Adrenal gland (tissue), 19 donors: ENCODE measurements at regions of chr15 and their contacts with region 1.

Region 1: DNA sequence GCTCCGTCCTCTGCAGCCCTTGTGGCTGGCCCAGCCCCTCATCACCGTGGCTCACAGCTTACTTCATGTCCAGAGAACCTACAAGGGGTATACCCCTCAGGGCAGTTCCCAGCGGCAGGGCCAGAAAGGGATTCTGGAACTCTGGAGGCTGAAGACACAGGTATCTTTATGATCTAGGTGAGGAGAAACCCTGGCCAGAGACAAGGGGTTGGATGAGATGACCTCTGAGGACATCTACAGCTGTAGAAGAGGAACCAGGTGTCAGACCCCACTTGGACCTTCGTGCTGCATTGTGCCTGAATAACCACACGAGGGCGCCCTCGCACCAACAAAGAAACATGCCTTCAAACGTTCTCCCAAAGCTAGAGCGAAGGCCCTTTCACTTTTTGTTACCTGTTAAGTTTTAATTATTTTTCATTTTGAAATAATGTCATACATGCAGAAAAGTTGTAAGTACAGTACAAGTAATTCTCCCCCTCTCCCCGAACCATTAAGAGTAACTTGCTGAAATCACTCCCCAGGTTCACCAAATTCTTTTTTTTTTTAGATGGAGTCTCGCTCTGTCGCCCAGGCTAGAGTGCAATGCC is 118.7 kb upstream of the SMAD3 start:
- DNase-seq: peak; percentile 49 to 87 (median 65)
- H3K4me3 ChIP-seq: no peak overlapping the region
- H3K27ac ChIP-seq: no peak overlapping the region
- H3K4me1 ChIP-seq: no peaks in the 10 kb centered on the region
- H3K27me3 ChIP-seq: no peaks in the 10 kb centered on the region
- CTCF ChIP-seq: peak; percentile 88 to 96 (median 94)
- POLR2A ChIP-seq: no peak

Region 2: GRCh38 chr15:66308531-66308930 is 638.1 kb before region 1 on chr15:
- intact Hi-C with region 1: no loop called
- DNase-seq: no peak
- H3K4me3 ChIP-seq: no peak overlapping the region
- H3K27ac ChIP-seq: no peak overlapping the region
- H3K4me1 ChIP-seq: peaks cover 0 to 11% of the 10 kb centered on the region in 2 donors
- H3K27me3 ChIP-seq: no peaks in the 10 kb centered on the region
- CTCF ChIP-seq: no peak
- POLR2A ChIP-seq: no peak

Region 3: GRCh38 chr15:66765478-66766281 is 181.0 kb before region 1 on chr15:
- intact Hi-C with region 1: no loop called
- DNase-seq: peak in 4 of 7 donors; percentile 40 to 64 (median 60)
- H3K4me3 ChIP-seq: no peak overlapping the region
- H3K27ac ChIP-seq: peak overlapping the region in 1 of 5 donors; percentile 75
- H3K4me1 ChIP-seq: peaks cover 14 to 47% of the 10 kb centered on the region in 2 donors
- H3K27me3 ChIP-seq: no peaks in the 10 kb centered on the region
- CTCF ChIP-seq: no peak
- POLR2A ChIP-seq: no peak

Region 4: GRCh38 chr15:66789029-66790025 is 157.3 kb before region 1 on chr15:
- intact Hi-C with region 1: no loop called
- DNase-seq: peak in 6 of 7 donors; percentile 41 to 65 (median 58)
- H3K4me3 ChIP-seq: no peak overlapping the region
- H3K27ac ChIP-seq: peak overlapping the region in 1 of 5 donors; percentile 34
- H3K4me1 ChIP-seq: no peaks in the 10 kb centered on the region
- H3K27me3 ChIP-seq: no peaks in the 10 kb centered on the region
- CTCF ChIP-seq: peak; percentile 22 to 55 (median 44)
- POLR2A ChIP-seq: no peak

Region 5: GRCh38 chr15:66803182-66803729 is 143.4 kb before region 1 on chr15:
- intact Hi-C with region 1: no loop called
- DNase-seq: peak; percentile 88 to 99 (median 96)
- H3K4me3 ChIP-seq: no peak overlapping the region
- H3K27ac ChIP-seq: peak overlapping the region; percentile 20 to 93 (median 58)
- H3K4me1 ChIP-seq: peaks cover 11 to 18% of the 10 kb centered on the region in 2 donors
- H3K27me3 ChIP-seq: no peaks in the 10 kb centered on the region
- CTCF ChIP-seq: no peak
- POLR2A ChIP-seq: peak in 1 of 2 donors; percentile 28

Region 6: GRCh38 chr15:67303490-67304363 is 357.1 kb after region 1 on chr15:
- intact Hi-C with region 1: loop called (anchors 5 to 10 kb)
- DNase-seq: peak in 3 of 7 donors; percentile 7 to 16 (median 13)
- H3K4me3 ChIP-seq: no peak overlapping the region
- H3K27ac ChIP-seq: no peak overlapping the region
- H3K4me1 ChIP-seq: no peaks in the 10 kb centered on the region
- H3K27me3 ChIP-seq: no peaks in the 10 kb centered on the region
- CTCF ChIP-seq: peak; percentile 13 to 65 (median 56)
- POLR2A ChIP-seq: no peak

Region 7: DNA sequence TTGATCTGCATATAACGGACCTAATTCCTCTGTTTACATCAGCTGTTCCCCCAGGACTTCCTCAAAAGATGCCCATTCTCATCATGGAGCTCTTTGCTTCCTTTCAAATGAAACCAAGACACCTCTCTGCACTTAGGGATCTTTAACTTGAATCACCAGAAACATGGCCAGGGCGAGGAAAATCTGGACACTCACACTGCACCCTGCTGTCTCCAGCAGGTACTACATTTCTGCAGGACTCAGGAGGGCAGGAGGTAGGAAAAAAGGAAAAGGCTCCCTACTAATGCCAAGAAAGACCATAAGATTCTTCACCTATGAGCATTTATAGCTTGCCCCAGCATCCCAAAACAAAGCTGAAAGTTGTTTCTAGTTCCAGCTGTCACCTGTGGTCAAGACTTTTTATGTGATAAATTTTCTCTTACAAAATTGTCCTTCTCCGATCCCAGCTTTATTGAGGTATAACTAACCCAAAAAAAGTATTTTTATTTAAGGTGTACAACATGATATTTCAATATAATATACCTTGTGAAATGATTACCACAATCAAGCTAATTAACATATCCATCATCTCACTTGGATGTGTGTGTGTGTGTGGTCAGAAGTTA is 486.9 kb after region 1 on chr15:
- intact Hi-C with region 1: loop called (anchors 5 kb)
- DNase-seq: peak; percentile 42 to 73 (median 56)
- H3K4me3 ChIP-seq: no peak overlapping the region
- H3K27ac ChIP-seq: no peak overlapping the region
- H3K4me1 ChIP-seq: no peaks in the 10 kb centered on the region
- H3K27me3 ChIP-seq: no peaks in the 10 kb centered on the region
- CTCF ChIP-seq: peak; percentile 70 to 77 (median 72)
- POLR2A ChIP-seq: no peak